ENCODE measurements at regions of chr17 and their contacts with region 1.

Region 1: GRCh38 chr17:82030470-82031302 is 792 bp upstream of the RAC3 start:
- DNase-seq: peak; percentile 96
- H3K4me3 ChIP-seq: peak overlapping the region; percentile 53 to 60 (median 58)
- H3K27ac ChIP-seq: peak overlapping the region; percentile 12 to 66 (median 40)
- H3K4me1 ChIP-seq: peaks cover 19 to 31% (median 26%) of the 10 kb centered on the region in 4 donors
- H3K27me3 ChIP-seq: peaks cover 0 to 18% (median 6%) of the 10 kb centered on the region in 4 donors
- CTCF ChIP-seq: peak; percentile 91 to 97 (median 93)
- EP300 ChIP-seq: no peak
- POLR2A ChIP-seq: no peak

Region 2: GRCh38 chr17:82086941-82087906 is 56.5 kb after region 1 on chr17:
- intact Hi-C with region 1: no loop called
- DNase-seq: no peak
- H3K4me3 ChIP-seq: no peak overlapping the region
- H3K27ac ChIP-seq: no peak overlapping the region
- H3K4me1 ChIP-seq: no peaks in the 10 kb centered on the region
- H3K27me3 ChIP-seq: no peaks in the 10 kb centered on the region
- CTCF ChIP-seq: no peak
- EP300 ChIP-seq: no peak
- POLR2A ChIP-seq: no peak

Region 3: DNA sequence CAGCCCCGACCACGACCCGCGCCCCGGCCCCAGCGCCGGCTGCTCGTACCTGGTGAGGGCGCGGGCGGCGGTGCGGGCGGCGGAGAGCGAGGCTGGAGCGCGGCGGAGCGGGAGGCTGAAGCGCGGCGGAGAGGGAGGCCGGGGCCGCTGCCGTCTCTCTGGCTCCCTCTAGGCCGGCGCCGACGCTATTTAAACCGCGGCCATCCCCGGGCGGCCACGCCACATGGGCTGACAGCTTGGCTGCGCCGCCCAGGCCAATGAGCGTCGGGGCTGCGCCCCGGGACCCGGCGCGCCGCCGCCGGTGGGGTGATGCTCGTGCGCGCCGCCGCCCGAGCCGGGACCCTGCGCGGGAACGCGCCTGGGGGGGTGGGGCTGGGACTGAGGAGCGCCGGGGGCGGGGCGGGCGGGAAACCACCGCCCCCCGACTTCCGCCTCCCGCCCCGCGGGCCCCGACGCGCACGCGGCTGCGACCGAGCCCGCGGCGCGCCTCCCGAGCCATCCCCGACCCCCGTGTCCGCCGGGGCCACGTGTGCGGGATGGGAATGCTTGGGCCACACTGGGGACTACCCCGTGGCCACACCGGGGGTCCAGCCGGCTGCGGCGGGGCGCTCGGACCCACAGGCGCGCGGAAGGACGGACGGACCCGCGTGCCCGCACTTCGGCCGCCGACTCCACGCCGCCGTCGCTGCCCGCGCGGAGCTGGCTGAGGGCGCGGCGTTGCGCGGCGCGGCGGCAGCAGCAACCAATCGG is 67.6 kb after region 1 on chr17 and contains the start of gene FASN:
- intact Hi-C with region 1: loop called (anchors 5 kb)
- DNase-seq: peak; percentile 98
- H3K4me3 ChIP-seq: peak within 1 kb of the TSS; percentile 74 to 92 (median 84)
- H3K27ac ChIP-seq: peak within 1 kb of the TSS; percentile 88 to 99 (median 95)
- H3K4me1 ChIP-seq: peaks cover 33 to 65% (median 56%) of the 10 kb centered on the region in 4 donors
- H3K27me3 ChIP-seq: no peaks in the 10 kb centered on the region
- CTCF ChIP-seq: peak in 2 of 3 experiments; percentile 36 to 55
- EP300 ChIP-seq: no peak
- POLR2A ChIP-seq: peak; percentile 57
- total RNA-seq, gene FASN: 30.3 to 63.6 (median 44.8) TPM

Measured in esophagus muscularis mucosa (tissue), 4 donors.